ENCODE measurements at regions of chr19 and their contacts with region 1.

Region 1: DNA sequence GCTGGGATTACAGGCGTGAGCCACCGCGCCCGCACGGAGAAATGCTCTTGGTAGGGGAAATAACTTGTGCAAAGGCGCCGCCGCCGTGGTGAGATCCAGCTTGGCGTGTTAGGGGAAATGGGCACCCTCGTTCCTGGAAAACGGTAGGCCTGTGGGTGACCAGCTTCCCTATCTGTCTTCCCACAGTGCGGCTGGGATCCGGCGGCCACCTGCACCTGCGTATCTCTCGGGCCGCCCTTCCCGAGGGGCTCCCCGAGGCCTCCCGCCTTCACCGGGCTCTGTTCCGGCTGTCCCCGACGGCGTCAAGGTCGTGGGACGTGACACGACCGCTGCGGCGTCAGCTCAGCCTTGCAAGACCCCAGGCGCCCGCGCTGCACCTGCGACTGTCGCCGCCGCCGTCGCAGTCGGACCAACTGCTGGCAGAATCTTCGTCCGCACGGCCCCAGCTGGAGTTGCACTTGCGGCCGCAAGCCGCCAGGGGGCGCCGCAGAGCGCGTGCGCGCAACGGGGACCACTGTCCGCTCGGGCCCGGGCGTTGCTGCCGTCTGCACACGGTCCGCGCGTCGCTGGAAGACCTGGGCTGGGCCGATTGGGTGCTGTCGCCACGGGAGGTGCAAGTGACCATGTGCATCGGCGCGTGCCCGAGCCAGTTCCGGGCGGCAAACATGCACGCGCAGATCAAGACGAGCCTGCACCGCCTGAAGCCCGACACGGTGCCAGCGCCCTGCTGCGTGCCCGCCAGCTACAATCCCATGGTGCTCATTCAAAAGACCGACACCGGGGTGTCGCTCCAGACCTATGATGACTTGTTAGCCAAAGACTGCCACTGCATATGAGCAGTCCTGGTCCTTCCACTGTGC is 2.4 kb downstream of the GDF15 start:
- DNase-seq: peak; percentile 55 to 96 (median 76)

Region 2: GRCh38 chr19:18167975-18168645 is 220.2 kb before region 1 on chr19:
- intact Hi-C with region 1: no loop called
- DNase-seq: peak in 5 of 10 donors; percentile 32 to 91 (median 48)

Region 3: DNA sequence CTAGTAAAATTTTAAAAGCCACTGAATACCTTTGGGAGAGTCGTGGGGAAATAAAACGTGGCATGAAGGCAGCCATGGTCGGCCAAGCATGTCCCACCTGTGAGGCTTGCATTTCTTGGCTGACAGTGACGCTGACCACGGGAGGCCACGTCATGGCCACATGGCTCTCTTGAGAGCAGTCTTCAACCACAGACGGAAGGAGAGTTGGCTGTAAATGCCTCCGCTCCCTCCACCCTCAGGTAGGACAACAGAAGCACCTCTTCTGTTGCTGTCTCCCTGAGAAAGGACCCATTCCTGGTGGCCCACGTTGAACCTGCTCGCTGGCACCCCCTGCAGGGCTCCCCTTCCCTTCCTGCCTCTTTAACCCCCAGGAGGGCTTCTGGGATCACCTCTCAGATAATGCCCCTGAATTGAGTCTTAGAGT is 19.7 kb after region 1 on chr19:
- intact Hi-C with region 1: loop called (anchors 1 kb)
- DNase-seq: no peak

Measured in posterior cingulate gyrus (tissue), 11 donors.